Endothelial cell of umbilical vein (primary cell): ENCODE measurements at regions of chr7 and their contacts with region 1.

Region 1: GRCh38 chr7:33932832-33933468 is 27.6 kb downstream of the BMPER start:
- DNase-seq: peak; percentile 85
- H3K4me3 ChIP-seq: peak overlapping the region in 2 of 3 experiments; percentile 13 to 17
- H3K27ac ChIP-seq: no peak overlapping the region
- H3K4me1 ChIP-seq: no peaks in the 10 kb centered on the region
- H3K27me3 ChIP-seq: peaks cover 0 to 1% of the 10 kb centered on the region in 2 experiments
- CTCF ChIP-seq: peak; percentile 95
- POLR2A ChIP-seq: no peak

Region 2: GRCh38 chr7:32761451-32762205 is 1171.3 kb before region 1 on chr7:
- CTCF ChIA-PET with region 1: interaction called, 11 read pairs
- POLR2A ChIA-PET with region 1: no interaction called
- dilution Hi-C with region 1: no loop called
- intact Hi-C with region 1: no loop called
- DNase-seq: peak; percentile 7
- H3K4me3 ChIP-seq: peak overlapping the region in 2 of 3 experiments; percentile 32 to 36
- H3K27ac ChIP-seq: no peak overlapping the region
- H3K4me1 ChIP-seq: peaks cover 8% of the 10 kb centered on the region
- H3K27me3 ChIP-seq: peaks cover 0 to 3% of the 10 kb centered on the region in 2 experiments
- CTCF ChIP-seq: peak in 1 of 2 donors; percentile 10
- POLR2A ChIP-seq: no peak

Region 3: GRCh38 chr7:33334349-33334748 is 598.6 kb before region 1 on chr7:
- CTCF ChIA-PET with region 1: interaction called, 52 read pairs
- POLR2A ChIA-PET with region 1: no interaction called
- dilution Hi-C with region 1: no loop called
- intact Hi-C with region 1: loop called (anchors 2 kb)
- DNase-seq: peak; percentile 41
- H3K4me3 ChIP-seq: no peak overlapping the region
- H3K27ac ChIP-seq: no peak overlapping the region
- H3K4me1 ChIP-seq: no peaks in the 10 kb centered on the region
- H3K27me3 ChIP-seq: no peaks in the 10 kb centered on the region
- CTCF ChIP-seq: peak; percentile 20 to 52
- POLR2A ChIP-seq: no peak

Region 4: GRCh38 chr7:33716581-33717477 is 216.1 kb before region 1 on chr7:
- CTCF ChIA-PET with region 1: interaction called, 33 read pairs
- POLR2A ChIA-PET with region 1: no interaction called
- dilution Hi-C with region 1: no loop called
- intact Hi-C with region 1: loop called (anchors 1 kb)
- DNase-seq: peak; percentile 84
- H3K4me3 ChIP-seq: no peak overlapping the region
- H3K27ac ChIP-seq: no peak overlapping the region
- H3K4me1 ChIP-seq: peaks cover 9% of the 10 kb centered on the region
- H3K27me3 ChIP-seq: no peaks in the 10 kb centered on the region
- CTCF ChIP-seq: peak; percentile 61 to 68
- POLR2A ChIP-seq: no peak

Region 5: DNA sequence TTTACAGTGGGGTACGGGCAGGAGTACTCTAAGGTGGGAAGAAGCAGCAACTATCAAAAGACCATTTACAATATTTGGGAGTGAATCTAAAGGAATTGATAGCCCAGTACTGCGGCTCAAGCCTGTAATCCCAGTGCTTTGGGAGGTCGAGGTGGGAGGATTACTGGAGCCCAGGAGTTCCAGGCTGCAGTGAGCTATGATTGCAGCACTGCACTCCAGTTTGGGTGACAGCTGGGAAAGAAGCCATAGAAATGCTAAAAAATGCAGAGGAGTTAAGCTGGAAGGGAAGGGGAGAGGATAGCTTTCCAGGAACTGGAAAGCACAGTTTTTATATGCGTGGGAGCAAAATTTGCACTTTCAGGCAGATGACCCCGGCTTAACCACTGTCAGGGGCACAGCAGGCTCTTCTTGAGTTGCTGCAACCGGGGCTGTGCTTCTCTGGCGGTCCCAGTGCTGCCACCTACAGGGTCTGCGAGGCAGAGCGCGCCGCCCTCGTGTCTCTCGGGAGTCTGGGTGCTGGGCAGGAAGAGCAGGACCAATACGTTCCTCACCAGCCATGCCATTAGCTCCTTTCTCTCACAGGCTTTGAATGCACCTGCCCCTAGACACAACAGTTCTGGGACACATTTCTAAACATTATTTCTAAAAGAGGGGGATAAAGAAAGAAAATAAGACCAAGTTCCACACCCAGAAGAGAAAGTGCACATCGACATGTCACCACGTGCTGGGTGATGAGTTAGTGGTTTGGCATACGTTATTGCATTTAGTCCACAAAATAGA is 37.7 kb before region 1 on chr7:
- CTCF ChIA-PET with region 1: interaction called, 33 read pairs
- POLR2A ChIA-PET with region 1: no interaction called
- dilution Hi-C with region 1: no loop called
- intact Hi-C with region 1: no loop called
- DNase-seq: peak; percentile 82
- H3K4me3 ChIP-seq: no peak overlapping the region
- H3K27ac ChIP-seq: no peak overlapping the region
- H3K4me1 ChIP-seq: no peaks in the 10 kb centered on the region
- H3K27me3 ChIP-seq: no peaks in the 10 kb centered on the region
- CTCF ChIP-seq: peak; percentile 86 to 98
- POLR2A ChIP-seq: no peak

Region 6: DNA sequence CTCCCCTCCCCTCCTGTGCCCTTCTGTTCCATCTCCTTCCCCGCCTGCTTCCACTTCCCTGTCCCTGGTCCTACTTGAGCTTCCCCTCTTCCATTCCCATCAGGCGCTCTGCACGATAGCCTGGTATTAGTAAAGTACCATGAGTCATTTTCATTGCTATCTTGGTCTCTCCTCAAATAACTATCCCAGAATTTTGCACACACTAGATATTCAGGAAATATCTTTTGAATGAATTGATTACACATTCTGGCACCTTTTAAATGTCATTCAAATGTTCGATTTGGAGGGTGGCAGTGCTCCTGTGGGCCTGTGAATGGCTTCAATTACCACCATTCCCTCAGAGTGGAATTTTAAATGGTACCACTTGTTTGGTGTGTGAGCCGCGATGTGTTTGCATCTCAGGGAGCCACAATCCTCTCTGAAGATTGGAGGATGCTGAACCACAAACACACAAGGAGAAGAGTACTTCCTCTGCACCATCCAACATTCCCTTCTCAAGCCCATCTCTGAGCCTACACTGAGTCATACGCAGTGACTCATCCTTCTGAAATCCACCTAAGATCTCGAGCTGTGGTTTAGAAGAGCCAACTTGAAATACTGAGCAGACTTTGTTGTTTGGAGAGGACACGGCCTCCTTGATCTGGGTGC is 54.1 kb after region 1 on chr7:
- CTCF ChIA-PET with region 1: interaction called, 12 read pairs
- POLR2A ChIA-PET with region 1: no interaction called
- dilution Hi-C with region 1: no loop called
- intact Hi-C with region 1: no loop called
- DNase-seq: peak; percentile 73
- H3K4me3 ChIP-seq: no peak overlapping the region
- H3K27ac ChIP-seq: peak overlapping the region; percentile 24
- H3K4me1 ChIP-seq: peaks cover 12% of the 10 kb centered on the region
- H3K27me3 ChIP-seq: no peaks in the 10 kb centered on the region
- CTCF ChIP-seq: no peak
- POLR2A ChIP-seq: no peak